ENCODE measurements at regions of chr3 and their contacts with region 1.

Region 1: DNA sequence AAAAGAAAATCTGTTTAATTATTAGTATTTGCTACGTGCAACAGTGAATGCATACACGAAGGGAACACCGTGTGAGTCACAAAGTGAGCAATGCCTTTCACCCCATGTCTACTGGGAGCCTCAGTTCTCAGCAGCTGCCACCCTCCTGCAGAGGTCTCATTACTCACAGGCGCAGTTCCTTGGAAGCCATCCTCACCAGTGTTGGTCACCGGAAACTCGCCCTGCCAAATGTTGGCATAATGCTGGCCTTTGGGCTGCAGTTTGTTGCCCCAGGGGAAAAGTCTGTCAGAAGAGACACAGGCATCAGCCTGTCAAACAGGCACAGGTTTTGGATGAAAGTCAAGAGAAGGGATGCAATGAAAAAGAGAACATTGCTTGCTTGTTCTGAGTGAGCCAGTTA is 50.1 kb downstream of the SUMF1 start:
- DNase-seq: peak; percentile 78 to 97
- H3K4me3 ChIP-seq: no peak overlapping the region
- H3K27ac ChIP-seq: peak overlapping the region; percentile 80 to 82
- H3K4me1 ChIP-seq: peaks cover 0 to 30% (median 22%) of the 10 kb centered on the region in 4 donors
- H3K27me3 ChIP-seq: no peaks in the 10 kb centered on the region
- CTCF ChIP-seq: peak in 1 of 2 experiments; percentile 2

Region 2: DNA sequence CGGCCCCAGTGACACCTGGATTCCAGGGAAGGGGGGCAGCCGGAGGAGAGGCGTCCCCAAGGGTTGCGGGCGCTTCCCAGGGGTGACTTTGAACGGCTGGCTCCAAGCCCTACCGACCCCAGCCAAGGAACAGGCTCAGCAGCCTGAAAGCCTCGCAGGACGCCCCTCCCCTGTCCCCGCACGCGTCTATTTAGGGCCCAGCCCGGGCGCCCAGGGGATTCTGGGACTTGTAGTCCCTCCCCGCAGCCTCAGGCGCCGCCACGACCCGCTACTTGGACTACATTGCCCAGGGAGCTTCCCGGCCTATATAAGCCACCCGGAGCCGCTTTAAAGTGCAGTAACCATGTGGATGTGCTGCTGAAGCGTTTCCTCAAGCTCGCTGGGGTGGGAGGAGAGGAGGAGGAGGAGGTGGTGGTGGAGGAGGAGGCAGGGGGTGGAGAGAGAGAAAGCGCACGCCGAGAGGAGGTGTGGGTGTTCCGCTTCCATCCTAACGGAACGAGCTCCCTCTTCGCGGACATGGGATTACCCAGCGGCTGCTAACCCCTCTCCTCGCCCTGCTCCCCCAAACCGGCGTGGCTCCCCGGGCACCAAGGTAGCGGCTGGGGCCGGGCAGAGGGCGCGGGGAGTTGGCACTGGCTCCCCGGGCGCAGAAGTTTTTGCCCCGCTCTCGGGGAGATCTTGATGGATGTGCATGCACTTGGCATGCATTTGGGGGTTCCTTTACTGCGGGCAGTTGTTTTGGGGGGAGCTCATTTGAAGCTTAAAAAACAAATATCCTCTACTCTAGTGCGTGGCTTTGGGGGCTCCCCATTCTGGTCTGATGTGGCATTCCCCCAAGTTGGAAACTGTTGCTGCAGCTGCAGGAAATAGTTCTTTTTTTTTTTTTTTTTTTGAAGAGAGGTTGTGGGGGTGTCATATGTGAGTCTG is 76.3 kb after region 1 on chr3 and contains the start of gene ITPR1:
- intact Hi-C with region 1: loop called (anchors 2 kb)
- DNase-seq: peak; percentile 99 to 100
- H3K4me3 ChIP-seq: peak within 1 kb of the TSS; percentile 80 to 93
- H3K27ac ChIP-seq: peak within 1 kb of the TSS; percentile 93 to 96
- H3K4me1 ChIP-seq: peaks cover 0 to 48% (median 10%) of the 10 kb centered on the region in 4 donors
- H3K27me3 ChIP-seq: no peaks in the 10 kb centered on the region
- CTCF ChIP-seq: no peak

Region 3: DNA sequence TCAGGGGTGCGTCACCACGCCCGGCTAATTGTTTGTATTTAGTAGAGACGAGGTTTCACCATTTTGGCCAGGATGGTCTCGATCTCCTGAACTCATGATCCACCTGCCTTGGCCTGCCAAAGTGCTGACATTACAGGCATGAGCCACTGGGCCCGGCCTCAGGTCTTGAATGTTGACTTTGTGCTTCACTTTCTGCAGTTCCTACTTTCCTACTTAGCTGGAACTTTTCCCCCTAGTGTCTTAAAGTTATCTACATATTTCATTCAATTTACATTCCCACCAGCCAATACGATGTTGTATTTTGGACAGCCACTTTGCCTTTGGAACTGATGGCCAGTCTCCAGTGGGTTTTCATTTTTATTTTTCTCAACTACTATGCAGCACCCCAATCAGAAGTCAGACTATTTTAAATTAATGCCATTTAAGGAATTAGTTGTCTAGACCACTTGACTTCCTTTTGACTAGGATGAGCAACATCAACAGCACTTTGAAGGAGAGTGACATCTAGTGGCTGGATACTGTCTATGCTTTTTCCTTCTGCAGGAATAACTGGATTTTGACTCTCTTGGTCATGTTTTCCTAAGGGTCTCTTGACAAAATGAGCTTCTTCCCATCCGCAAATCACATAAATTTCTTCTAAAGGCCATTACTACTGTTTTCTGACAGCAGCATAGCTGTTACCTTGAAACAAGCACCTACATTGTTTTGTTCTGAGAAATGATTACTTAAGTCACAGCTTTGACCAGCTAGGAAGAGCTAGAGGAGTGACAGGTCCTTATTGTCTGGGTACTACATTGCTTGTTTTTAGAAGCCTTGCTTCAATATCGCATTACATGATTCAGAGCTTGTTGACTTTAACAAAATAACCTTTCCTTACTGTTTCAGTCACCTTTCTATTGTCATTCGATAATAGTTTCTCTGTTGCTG is 216.4 kb after region 1 on chr3:
- intact Hi-C with region 1: no loop called
- DNase-seq: no peak
- H3K4me3 ChIP-seq: no peak overlapping the region
- H3K27ac ChIP-seq: peak overlapping the region; percentile 36 to 51
- H3K4me1 ChIP-seq: peaks cover 0 to 10% (median 3%) of the 10 kb centered on the region in 4 donors
- H3K27me3 ChIP-seq: no peaks in the 10 kb centered on the region
- CTCF ChIP-seq: peak; percentile 75 to 83

Measured in tibial artery (tissue), 4 donors.